Body of pancreas (tissue), 4 donors: ENCODE measurements at regions of chr3 and their contacts with region 1.

Region 1: GRCh38 chr3:51670823-51671733 is at the start of gene TEX264:
- DNase-seq: peak; percentile 90 to 92 (median 91)
- ATAC-seq: peak; percentile 83
- H3K4me3 ChIP-seq: peak within 1 kb of the TSS; percentile 68 to 75
- H3K27ac ChIP-seq: peak within 1 kb of the TSS; percentile 58 to 96 (median 92)
- H3K4me1 ChIP-seq: peaks cover 31% of the 10 kb centered on the region
- H3K27me3 ChIP-seq: no peaks in the 10 kb centered on the region
- CTCF ChIP-seq: no peak
- POLR2A ChIP-seq: peak; percentile 62 to 79 (median 77)
- total RNA-seq, gene TEX264: 41.2 to 44.1 TPM

Region 2: DNA sequence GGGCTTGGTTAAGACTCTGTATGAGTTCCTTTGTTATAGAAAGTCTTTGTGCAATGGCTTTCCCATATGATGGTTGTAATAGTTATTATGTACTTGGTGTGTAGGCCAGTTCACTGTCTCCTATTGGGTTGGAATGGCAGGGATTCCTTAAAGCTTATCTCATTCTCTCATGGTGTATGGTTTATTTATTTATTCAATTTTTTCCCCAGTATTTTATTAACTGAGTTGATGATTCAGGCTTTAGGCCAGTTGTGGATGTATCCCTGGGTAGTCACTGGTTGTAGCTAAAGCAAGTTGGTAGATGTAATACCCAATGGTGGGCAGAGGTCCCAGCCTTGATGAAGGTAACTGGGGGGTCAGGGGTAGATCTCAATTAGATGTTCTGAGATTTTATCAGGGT is 647.0 kb before region 1 on chr3:
- intact Hi-C with region 1: no loop called
- DNase-seq: no peak
- ATAC-seq: no peak
- H3K4me3 ChIP-seq: no peak overlapping the region
- H3K27ac ChIP-seq: no peak overlapping the region
- H3K4me1 ChIP-seq: no peaks in the 10 kb centered on the region
- H3K27me3 ChIP-seq: no peaks in the 10 kb centered on the region
- CTCF ChIP-seq: no peak
- POLR2A ChIP-seq: no peak

Region 3: GRCh38 chr3:51391075-51391567 is 280.0 kb before region 1 on chr3 and contains the start of gene RBM15B:
- intact Hi-C with region 1: loop called (anchors 10 kb)
- DNase-seq: peak; percentile 98 to 99 (median 98)
- ATAC-seq: peak; percentile 93
- H3K4me3 ChIP-seq: peak within 1 kb of the TSS; percentile 46 to 75
- H3K27ac ChIP-seq: peak within 1 kb of the TSS; percentile 82 to 90 (median 85)
- H3K4me1 ChIP-seq: peaks cover 88% of the 10 kb centered on the region
- H3K27me3 ChIP-seq: no peaks in the 10 kb centered on the region
- CTCF ChIP-seq: peak in 6 of 7 experiments; percentile 83 to 98 (median 91)
- POLR2A ChIP-seq: peak; percentile 20 to 83 (median 50)
- total RNA-seq, gene RBM15B: 21.1 to 22.8 TPM

Region 4: DNA sequence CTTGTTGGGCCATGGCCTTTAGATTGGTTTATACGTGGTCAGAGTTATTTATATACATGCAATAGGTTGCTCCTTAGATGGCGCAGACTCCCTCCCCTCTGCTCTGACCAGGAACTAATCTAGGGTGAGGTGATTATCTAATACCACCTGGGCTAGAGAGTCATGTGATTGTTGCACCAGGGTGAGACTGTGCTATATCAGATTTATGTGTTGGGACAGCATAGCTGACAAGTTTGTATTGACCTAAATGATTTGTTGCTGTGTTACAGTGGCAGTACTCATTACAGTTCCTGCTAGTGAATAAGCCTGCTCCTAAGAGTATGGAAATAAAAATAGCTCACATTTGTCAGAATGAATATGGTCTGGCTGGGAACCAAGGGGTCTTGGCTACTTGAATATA is 115.2 kb after region 1 on chr3:
- intact Hi-C with region 1: no loop called
- DNase-seq: no peak
- ATAC-seq: no peak
- H3K4me3 ChIP-seq: no peak overlapping the region
- H3K27ac ChIP-seq: no peak overlapping the region
- H3K4me1 ChIP-seq: no peaks in the 10 kb centered on the region
- H3K27me3 ChIP-seq: no peaks in the 10 kb centered on the region
- CTCF ChIP-seq: no peak
- POLR2A ChIP-seq: no peak